Right ventricle myocardium superior (tissue), 1 donor: ENCODE measurements at regions of chr13 and their contacts with region 1.

Region 1: GRCh38 chr13:20828539-20829364 is 55.0 kb upstream of the EEF1AKMT1 start:
- DNase-seq: no peak
- ATAC-seq: peak; percentile 57

Region 2: GRCh38 chr13:20713751-20714150 is 115.0 kb before region 1 on chr13:
- intact Hi-C with region 1: loop called (anchors 5 kb)
- DNase-seq: no peak
- ATAC-seq: peak; percentile 8